AG04450 (cell line): ENCODE measurements at regions of chr6 and their contacts with region 1.

Region 1: DNA sequence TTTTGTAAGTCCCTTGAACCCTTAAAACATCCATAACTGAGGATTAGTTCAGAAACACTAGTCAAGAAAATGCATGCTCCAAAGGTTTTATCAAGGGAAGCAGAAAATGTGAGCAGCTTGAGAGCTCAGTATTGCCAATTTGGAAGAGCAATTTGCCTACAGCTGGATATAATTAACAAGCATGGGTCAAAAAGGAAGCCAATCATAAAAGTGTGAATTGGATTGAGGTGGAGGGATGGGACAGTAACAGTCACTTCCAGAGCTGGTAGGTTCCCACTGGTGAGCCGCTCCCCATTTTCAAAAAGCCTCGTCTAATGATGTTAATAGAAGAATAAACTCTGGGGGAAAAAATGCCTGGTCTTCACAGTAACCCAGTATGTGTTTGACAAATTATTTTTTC is 5.0 kb upstream of the PTPRK start:
- DNase-seq: no peak
- H3K4me3 ChIP-seq: no peak overlapping the region
- H3K27ac ChIP-seq: no peak overlapping the region
- H3K27me3 ChIP-seq: no peaks in the 10 kb centered on the region
- CTCF ChIP-seq: no peak

Region 2: GRCh38 chr6:127938701-127939100 is 586.7 kb before region 1 on chr6:
- CTCF ChIA-PET with region 1: interaction called, 10 read pairs
- POLR2A ChIA-PET with region 1: no interaction called
- DNase-seq: no peak
- H3K4me3 ChIP-seq: no peak overlapping the region
- H3K27ac ChIP-seq: no peak overlapping the region
- H3K27me3 ChIP-seq: no peaks in the 10 kb centered on the region
- CTCF ChIP-seq: no peak